ENCODE measurements at regions of chr1 and their contacts with region 1.

Region 1: GRCh38 chr1:224623743-224624333 is 7.7 kb downstream of the CNIH3 start:
- DNase-seq: peak; percentile 87
- ATAC-seq: peak; percentile 92
- H3K4me3 Mint-ChIP-seq: peak overlapping the region; percentile 45
- H3K27ac Mint-ChIP-seq: peak overlapping the region; percentile 96
- H3K4me1 Mint-ChIP-seq: peaks cover 25% of the 10 kb centered on the region
- H3K27me3 Mint-ChIP-seq: peaks cover 25% of the 10 kb centered on the region

Region 2: GRCh38 chr1:224356685-224357625 is 266.9 kb before region 1 on chr1 and contains the start of gene CNIH4:
- CTCF ChIA-PET with region 1: no interaction called
- POLR2A ChIA-PET with region 1: no interaction called
- intact Hi-C with region 1: no loop called
- DNase-seq: peak; percentile 95
- ATAC-seq: peak; percentile 98
- H3K4me3 Mint-ChIP-seq: peak within 1 kb of the TSS; percentile 80
- H3K27ac Mint-ChIP-seq: peak within 1 kb of the TSS; percentile 89
- H3K4me1 Mint-ChIP-seq: peaks cover 30% of the 10 kb centered on the region
- H3K27me3 Mint-ChIP-seq: no peaks in the 10 kb centered on the region
- total RNA-seq, gene CNIH4: 29.9 to 49.6 TPM

Region 3: GRCh38 chr1:224521904-224522734 is 101.7 kb before region 1 on chr1:
- CTCF ChIA-PET with region 1: no interaction called
- POLR2A ChIA-PET with region 1: no interaction called
- intact Hi-C with region 1: no loop called
- DNase-seq: no peak
- ATAC-seq: no peak
- H3K4me3 Mint-ChIP-seq: no peak overlapping the region
- H3K27ac Mint-ChIP-seq: no peak overlapping the region
- H3K4me1 Mint-ChIP-seq: no peaks in the 10 kb centered on the region
- H3K27me3 Mint-ChIP-seq: no peaks in the 10 kb centered on the region

Region 4: DNA sequence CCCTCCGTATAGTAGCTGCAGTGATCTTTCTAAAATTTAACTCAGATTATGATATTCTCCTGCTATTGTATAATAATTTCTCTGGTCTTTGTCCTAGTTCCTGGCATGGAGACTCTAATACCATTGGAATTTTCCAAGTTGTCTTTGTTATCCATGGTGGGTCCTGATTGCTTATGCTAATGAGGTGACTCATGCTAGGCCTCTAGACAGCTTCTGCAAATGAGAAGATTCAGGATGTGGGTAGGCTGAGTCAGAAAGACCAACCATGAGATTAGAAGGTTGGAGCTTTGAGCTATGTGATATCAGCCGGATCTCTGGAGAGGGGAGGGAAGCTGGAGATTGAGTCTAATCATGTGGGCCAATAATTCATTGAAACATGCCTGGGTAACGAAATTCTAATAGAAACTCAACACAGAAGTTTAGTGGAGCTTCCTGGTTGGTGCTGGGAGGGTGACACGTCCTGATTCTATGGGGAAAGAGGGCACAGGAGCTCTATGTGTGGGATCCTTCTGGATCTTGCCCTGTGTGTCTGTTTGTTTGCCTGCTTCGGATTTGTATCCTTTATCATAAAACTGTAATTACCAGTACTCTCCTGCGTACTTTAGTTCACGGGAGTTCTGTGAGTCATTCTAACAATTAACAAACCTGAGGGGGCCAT is 80.9 kb before region 1 on chr1:
- CTCF ChIA-PET with region 1: no interaction called
- POLR2A ChIA-PET with region 1: interaction called, 3 read pairs
- intact Hi-C with region 1: loop called in 1 of 2 experiments (anchors 5 kb)
- DNase-seq: peak; percentile 50
- ATAC-seq: peak; percentile 100
- H3K4me3 Mint-ChIP-seq: no peak overlapping the region
- H3K27ac Mint-ChIP-seq: no peak overlapping the region
- H3K4me1 Mint-ChIP-seq: peaks cover 18% of the 10 kb centered on the region
- H3K27me3 Mint-ChIP-seq: peaks cover 6% of the 10 kb centered on the region

Region 5: DNA sequence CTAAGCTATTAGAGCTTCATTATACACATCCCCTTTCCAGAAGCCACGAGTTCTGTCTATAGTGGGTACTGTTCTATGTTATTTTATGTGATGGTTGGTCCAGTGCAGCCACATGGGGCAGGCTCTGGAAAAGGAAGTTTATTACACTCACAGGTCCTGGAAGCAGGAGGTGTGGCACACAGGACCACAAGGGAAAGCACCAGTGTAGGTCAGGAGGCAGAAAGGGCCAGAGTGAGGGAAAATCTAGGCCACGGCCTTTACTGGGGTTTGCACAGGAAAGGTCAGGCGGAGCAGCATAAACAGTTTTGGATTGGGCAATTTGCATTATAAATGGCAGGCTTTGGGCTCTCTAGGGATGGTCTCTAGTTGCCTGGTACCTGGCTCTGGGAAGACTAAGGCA is 29.5 kb before region 1 on chr1:
- CTCF ChIA-PET with region 1: no interaction called
- POLR2A ChIA-PET with region 1: no interaction called
- intact Hi-C with region 1: no loop called
- DNase-seq: no peak
- ATAC-seq: no peak
- H3K4me3 Mint-ChIP-seq: no peak overlapping the region
- H3K27ac Mint-ChIP-seq: no peak overlapping the region
- H3K4me1 Mint-ChIP-seq: no peaks in the 10 kb centered on the region
- H3K27me3 Mint-ChIP-seq: no peaks in the 10 kb centered on the region

Region 6: DNA sequence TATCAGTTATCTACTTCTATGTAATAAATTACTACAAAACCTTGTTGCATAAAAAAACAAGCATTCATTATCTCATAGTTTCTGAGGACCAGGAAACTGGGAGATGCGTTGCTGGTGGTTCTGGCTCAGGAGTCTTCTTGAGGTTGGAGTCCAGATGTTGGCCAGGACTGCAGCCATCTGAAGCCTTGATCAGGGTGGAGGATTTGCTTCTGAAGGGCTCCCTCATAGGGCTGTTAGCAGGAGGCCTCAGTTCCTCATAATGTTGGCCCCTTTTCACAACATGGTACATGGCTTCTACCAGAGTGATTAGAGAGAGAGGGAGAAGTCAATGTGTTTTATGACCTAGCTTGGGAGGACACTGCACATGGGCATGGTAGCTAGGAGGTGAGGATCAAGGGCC is 129.7 kb after region 1 on chr1:
- CTCF ChIA-PET with region 1: no interaction called
- POLR2A ChIA-PET with region 1: no interaction called
- intact Hi-C with region 1: no loop called
- DNase-seq: no peak
- ATAC-seq: no peak
- H3K4me3 Mint-ChIP-seq: no peak overlapping the region
- H3K27ac Mint-ChIP-seq: no peak overlapping the region
- H3K4me1 Mint-ChIP-seq: peaks cover 12% of the 10 kb centered on the region
- H3K27me3 Mint-ChIP-seq: peaks cover 9% of the 10 kb centered on the region

Measured in activated CD4-positive, alpha-beta T cell treated with anti-CD3 and anti-CD28 coated beads for 36 hours (primary cell).